ENCODE measurements at regions of chr9 and their contacts with region 1.

Region 1: GRCh38 chr9:136790927-136791641 is at the start of gene TMEM141:
- DNase-seq: peak; percentile 100
- ATAC-seq: peak; percentile 96
- total RNA-seq, gene TMEM141: 75.9 TPM

Region 2: GRCh38 chr9:136644598-136645351 is 146.3 kb before region 1 on chr9:
- intact Hi-C with region 1: no loop called
- DNase-seq: peak; percentile 91
- ATAC-seq: peak; percentile 60

Region 3: DNA sequence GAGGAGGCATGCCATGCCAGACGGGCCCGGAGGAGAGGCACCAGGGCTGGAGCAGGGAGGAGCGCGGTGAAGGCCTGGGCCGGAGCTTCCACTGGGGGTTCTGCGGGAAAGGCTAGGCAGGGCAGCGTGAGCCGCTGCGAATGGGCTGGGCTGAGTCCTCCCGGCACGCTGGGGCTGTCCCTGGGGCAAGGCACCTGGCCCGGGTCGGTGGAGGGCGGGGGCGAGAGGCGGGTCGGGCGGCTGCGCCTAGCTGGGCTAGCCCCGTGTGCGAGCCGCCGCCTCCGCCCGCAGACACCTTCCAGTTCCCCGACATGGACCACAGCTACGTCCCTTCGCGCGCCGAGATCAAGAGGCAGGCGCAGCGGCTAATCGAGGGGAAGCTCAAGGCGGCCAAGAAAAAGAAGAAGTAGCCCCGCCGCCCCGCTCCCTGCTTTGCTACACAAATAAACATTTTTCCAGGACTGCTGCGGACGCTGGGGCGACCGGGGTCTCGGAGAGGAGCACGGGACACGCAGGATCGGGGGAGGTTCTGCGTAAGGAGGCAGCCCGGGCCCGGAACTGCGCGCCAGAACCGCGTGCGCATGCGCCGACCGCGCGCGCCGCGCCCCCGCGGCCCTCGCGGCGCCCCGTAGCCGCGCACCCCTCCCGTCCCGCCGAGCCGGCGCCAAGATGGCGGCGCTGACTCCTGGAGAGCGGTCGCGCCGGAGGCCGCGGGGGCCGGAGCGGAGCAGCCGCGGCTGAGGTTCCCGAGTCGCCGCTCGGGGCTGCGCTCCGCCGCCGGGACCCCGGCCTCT is 16.4 kb after region 1 on chr9 and contains the start of gene RABL6:
- intact Hi-C with region 1: loop called (anchors 1 kb)
- DNase-seq: peak; percentile 90
- ATAC-seq: peak; percentile 92
- total RNA-seq, gene RABL6: 69.5 TPM

Region 4: DNA sequence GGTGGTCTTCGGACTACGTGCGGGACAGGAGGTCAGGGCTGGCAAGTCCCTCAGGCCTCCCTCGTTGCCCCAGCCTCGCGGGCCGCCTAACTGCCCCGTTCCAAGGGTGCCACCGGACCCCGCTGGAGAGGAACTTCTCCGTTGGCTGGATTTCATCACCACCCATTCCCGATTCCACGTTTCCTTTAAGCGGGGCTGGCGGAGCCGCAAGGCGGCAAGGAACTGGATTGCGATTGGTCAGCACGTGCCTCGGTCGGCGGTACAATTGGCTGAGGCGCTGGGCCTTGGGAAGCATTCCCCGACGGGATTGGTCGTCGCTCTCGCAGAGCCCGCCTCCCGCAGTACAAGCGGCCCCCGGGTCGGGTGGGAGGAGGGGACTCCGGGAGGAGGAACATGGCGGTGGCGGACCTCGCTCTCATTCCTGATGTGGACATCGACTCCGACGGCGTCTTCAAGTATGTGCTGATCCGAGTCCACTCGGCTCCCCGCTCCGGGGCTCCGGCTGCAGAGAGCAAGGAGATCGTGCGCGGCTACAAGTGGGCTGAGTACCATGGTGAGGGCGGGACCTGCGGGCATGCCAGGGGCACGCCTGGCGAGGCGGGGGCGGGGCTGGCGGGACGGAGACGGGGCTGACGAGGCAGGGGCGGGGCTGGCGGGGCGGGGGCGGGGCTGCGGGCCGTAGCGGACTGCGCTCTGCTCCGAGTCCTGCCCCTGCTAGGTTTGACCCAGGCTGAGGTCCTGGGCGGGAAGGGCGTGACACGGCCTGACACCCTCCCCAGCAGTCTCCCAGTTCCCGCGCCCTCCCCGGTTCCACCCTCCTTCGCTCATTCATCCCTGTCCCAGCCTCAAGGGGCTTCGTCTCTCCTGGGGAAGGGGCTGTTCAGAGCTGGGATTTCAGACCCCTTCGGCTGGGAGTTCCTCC is 58.2 kb after region 1 on chr9 and contains the start of gene PHPT1:
- intact Hi-C with region 1: loop called (anchors 2 kb)
- DNase-seq: peak; percentile 99
- ATAC-seq: peak; percentile 87
- total RNA-seq, gene PHPT1: 358 TPM

Region 5: DNA sequence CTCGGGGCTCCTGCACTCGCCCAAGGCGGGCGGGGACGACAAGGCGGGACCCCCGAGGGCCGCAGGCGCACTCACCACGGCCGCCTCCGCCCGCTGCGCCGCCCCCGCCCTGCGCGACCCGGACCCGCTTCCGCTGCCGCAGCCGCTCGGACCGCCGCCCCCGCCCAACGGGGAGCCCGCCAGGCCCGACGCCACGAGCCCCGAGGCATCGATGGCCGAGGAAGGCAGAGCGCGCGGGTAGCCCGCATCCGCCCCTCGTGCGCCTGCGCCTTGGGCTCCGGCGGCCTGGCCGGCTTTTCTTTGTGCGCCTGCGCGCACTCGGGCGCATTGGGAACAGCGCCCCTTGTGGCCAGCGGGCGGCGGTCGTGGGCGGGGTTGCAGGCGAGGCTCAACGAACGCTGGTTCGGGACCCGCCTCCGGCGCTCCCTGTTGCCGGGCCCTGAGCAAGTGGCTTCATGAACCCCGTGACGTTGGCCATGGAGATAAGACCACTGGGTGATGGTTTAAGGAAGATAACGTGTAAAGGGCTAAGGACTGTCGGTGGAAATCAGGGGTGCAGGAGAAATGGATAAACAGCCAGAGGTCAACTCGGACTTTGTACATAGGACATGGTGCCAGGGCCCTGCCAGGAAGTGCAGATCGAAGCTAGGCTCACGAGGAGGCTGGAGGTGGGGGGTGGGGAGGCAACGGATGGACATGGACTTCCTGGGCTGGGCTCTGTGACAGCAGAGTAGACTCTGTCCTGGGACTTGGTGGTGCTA is 153.6 kb after region 1 on chr9 and contains the starts of genes C8G and FBXW5:
- intact Hi-C with region 1: loop called (anchors 2 kb)
- DNase-seq: peak; percentile 98
- ATAC-seq: peak; percentile 81
- total RNA-seq, gene C8G: 1.3 TPM
- total RNA-seq, gene FBXW5: 143 TPM

Region 6: GRCh38 chr9:137034863-137035761 is 244.0 kb after region 1 on chr9:
- intact Hi-C with region 1: loop called (anchors 2 kb)
- DNase-seq: peak; percentile 93
- ATAC-seq: peak; percentile 70

Region 7: GRCh38 chr9:137067860-137068538 is 276.9 kb after region 1 on chr9:
- intact Hi-C with region 1: loop called (anchors 10 kb)
- DNase-seq: peak; percentile 89
- ATAC-seq: peak; percentile 48

Region 8: GRCh38 chr9:137223078-137223970 is 432.2 kb after region 1 on chr9:
- intact Hi-C with region 1: loop called (anchors 5 kb)
- DNase-seq: peak; percentile 98
- ATAC-seq: peak; percentile 93

Measured in Right ventricle myocardium inferior (tissue), 1 donor.